Naive thymus-derived CD4-positive, alpha-beta T cell (primary cell): ENCODE measurements at regions of chr17 and their contacts with region 1.

Region 1: GRCh38 chr17:49788478-49789242 is at the start of gene KAT7:
- DNase-seq: peak; percentile 90 to 99 (median 99)
- ATAC-seq: peak; percentile 90
- H3K4me3 ChIP-seq: peak within 1 kb of the TSS; percentile 98
- H3K4me3 Mint-ChIP-seq: peak within 1 kb of the TSS; percentile 92 to 99 (median 96)
- H3K27ac ChIP-seq: peak within 1 kb of the TSS; percentile 98
- H3K27ac Mint-ChIP-seq: peak within 1 kb of the TSS; percentile 91 to 99 (median 98)
- H3K4me1 ChIP-seq: peaks cover 17 to 30% of the 10 kb centered on the region in 2 donors
- H3K4me1 Mint-ChIP-seq: peaks cover 39 to 62% (median 58%) of the 10 kb centered on the region in 7 donors
- H3K27me3 ChIP-seq: no peaks in the 10 kb centered on the region
- H3K27me3 Mint-ChIP-seq: peaks cover 0 to 8% (median 0%) of the 10 kb centered on the region in 5 donors
- total RNA-seq, gene KAT7: 85.6 to 195 (median 132) TPM

Region 2: DNA sequence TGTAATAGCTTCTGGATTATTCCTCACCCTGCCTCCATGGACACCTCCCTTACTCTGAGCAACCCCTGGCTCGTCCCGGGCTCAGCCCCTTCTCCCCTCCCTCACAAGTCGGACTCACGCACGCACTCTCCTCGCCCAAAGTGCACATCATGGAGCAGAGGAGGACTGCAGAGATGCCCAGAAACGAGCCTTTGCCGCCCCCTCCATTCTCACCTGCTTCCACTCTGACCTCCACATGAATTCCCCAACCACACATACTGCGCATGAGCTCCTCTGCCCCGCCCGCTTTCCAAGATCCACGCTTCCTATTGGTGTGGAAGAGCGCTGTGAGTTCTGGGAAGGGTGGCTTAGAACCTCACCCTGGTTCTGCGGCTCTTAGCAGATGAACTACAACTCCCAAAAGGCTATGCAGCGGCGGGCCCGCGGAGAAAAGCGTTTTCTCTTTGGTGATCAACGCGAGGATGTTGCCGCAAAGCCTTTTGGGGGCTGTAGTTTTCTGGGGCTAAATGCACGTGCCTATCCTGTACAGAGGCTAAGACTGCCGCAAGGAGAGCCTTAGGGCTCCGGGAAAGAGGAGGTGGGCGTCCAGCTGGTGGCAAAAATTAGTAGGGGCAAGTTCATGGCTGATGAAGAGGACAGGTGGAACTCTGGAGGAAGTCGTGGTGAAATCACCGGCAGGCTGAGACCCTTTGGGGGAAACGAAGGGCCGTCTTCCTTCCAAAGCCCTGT is 373.9 kb before region 1 on chr17 and contains the start of gene PHB1:
- CTCF ChIA-PET with region 1: no interaction called
- POLR2A ChIA-PET with region 1: no interaction called
- intact Hi-C with region 1: loop called (anchors 1 to 10 kb)
- DNase-seq: peak; percentile 75 to 98 (median 93)
- ATAC-seq: peak; percentile 99
- H3K4me3 ChIP-seq: peak within 1 kb of the TSS; percentile 77
- H3K4me3 Mint-ChIP-seq: peak within 1 kb of the TSS; percentile 92 to 99 (median 96)
- H3K27ac ChIP-seq: peak within 1 kb of the TSS; percentile 77
- H3K27ac Mint-ChIP-seq: peak within 1 kb of the TSS; percentile 78 to 99 (median 92)
- H3K4me1 ChIP-seq: peaks cover 8% of the 10 kb centered on the region in 2 donors
- H3K4me1 Mint-ChIP-seq: peaks cover 11 to 30% (median 26%) of the 10 kb centered on the region in 7 donors
- H3K27me3 ChIP-seq: no peaks in the 10 kb centered on the region
- H3K27me3 Mint-ChIP-seq: peaks cover 0 to 3% (median 0%) of the 10 kb centered on the region in 5 donors
- total RNA-seq, gene PHB1: 50.0 to 186 (median 54.4) TPM

Region 3: DNA sequence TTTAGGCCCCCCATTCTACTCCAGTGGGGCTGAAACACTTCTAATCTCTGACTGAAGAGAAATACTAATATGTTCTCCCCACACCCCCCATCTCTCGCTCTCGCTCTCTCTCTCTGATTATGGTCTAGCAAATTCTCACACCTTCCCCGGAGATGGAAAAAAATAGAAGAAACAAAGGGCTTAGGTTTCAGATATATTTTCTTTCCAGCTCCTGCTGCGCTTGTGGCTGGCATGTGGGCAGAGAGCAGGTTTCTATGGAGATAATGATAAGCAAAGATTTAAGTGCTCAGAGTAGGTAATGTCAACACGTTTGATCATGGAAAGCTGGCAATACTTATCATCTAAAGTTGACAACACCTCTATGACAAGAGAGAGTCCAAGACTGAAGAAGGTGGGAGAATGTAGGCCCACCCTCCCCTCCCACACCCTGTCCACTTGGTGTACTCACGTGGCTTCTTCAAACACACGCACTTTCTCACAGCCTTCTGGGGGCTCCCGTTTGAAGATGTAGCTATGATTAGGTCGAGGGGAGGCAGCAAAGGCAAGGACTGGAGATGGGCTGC is 72.9 kb before region 1 on chr17:
- CTCF ChIA-PET with region 1: interaction called, 3 read pairs
- POLR2A ChIA-PET with region 1: interaction called, 10 read pairs
- intact Hi-C with region 1: no loop called
- DNase-seq: peak in 3 of 9 donors; percentile 23 to 41 (median 39)
- ATAC-seq: peak; percentile 78
- H3K4me3 ChIP-seq: no peak overlapping the region
- H3K4me3 Mint-ChIP-seq: peak overlapping the region in 3 of 10 donors; percentile 19 to 51 (median 48)
- H3K27ac ChIP-seq: peak overlapping the region; percentile 66
- H3K27ac Mint-ChIP-seq: peak overlapping the region; percentile 45 to 90 (median 89)
- H3K4me1 ChIP-seq: peaks cover 0 to 49% of the 10 kb centered on the region in 2 donors
- H3K4me1 Mint-ChIP-seq: peaks cover 22 to 35% (median 23%) of the 10 kb centered on the region in 7 donors
- H3K27me3 ChIP-seq: no peaks in the 10 kb centered on the region
- H3K27me3 Mint-ChIP-seq: no peaks in the 10 kb centered on the region

Region 4: GRCh38 chr17:49748791-49749190 is 39.9 kb before region 1 on chr17:
- CTCF ChIA-PET with region 1: no interaction called
- POLR2A ChIA-PET with region 1: interaction called, 22 read pairs
- intact Hi-C with region 1: loop called in 1 of 2 experiments (anchors 1 kb)
- DNase-seq: peak in 6 of 9 donors; percentile 43 to 61 (median 48)
- ATAC-seq: peak; percentile 79
- H3K4me3 ChIP-seq: no peak overlapping the region
- H3K4me3 Mint-ChIP-seq: peak overlapping the region; percentile 60 to 87 (median 76)
- H3K27ac ChIP-seq: peak overlapping the region; percentile 84
- H3K27ac Mint-ChIP-seq: peak overlapping the region; percentile 88 to 98 (median 97)
- H3K4me1 ChIP-seq: peaks cover 70 to 76% of the 10 kb centered on the region in 2 donors
- H3K4me1 Mint-ChIP-seq: peaks cover 49 to 92% (median 76%) of the 10 kb centered on the region in 7 donors
- H3K27me3 ChIP-seq: no peaks in the 10 kb centered on the region
- H3K27me3 Mint-ChIP-seq: no peaks in the 10 kb centered on the region

Region 5: DNA sequence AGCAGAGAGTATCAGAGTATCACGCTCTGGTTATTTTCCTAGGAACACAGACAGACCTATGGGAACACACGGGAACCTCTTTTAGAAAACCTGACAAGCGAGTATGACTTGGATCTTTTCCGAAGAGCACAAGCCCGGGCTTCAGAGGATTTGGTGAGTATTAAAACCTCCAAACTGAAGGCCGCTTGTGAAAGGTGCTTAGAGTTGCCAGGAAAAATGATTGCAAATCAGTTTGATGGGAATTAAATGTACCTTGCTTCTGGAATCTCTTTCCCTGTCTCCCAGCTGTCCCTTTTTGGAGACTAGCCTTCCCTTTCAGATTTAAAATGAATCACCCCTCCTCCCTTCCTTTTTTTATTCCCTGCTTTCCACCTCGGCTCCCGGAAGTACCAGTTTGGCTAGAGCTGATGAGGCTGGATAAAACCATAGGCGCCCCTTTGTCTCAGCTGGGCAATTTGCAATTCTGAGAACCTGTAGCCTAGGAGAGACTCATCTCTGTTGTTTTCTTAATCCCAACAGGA is 27.2 kb after region 1 on chr17:
- CTCF ChIA-PET with region 1: no interaction called
- POLR2A ChIA-PET with region 1: interaction called, 11 read pairs
- intact Hi-C with region 1: loop called in 1 of 2 experiments (anchors 1 kb)
- DNase-seq: no peak
- ATAC-seq: no peak
- H3K4me3 ChIP-seq: no peak overlapping the region
- H3K4me3 Mint-ChIP-seq: peak overlapping the region in 5 of 10 donors; percentile 43 to 85 (median 67)
- H3K27ac ChIP-seq: peak overlapping the region; percentile 55
- H3K27ac Mint-ChIP-seq: peak overlapping the region; percentile 78 to 99 (median 96)
- H3K4me1 ChIP-seq: peaks cover 36 to 60% of the 10 kb centered on the region in 2 donors
- H3K4me1 Mint-ChIP-seq: peaks cover 32 to 79% (median 73%) of the 10 kb centered on the region in 7 donors
- H3K27me3 ChIP-seq: no peaks in the 10 kb centered on the region
- H3K27me3 Mint-ChIP-seq: no peaks in the 10 kb centered on the region

Region 6: GRCh38 chr17:49899191-49899485 is 110.5 kb after region 1 on chr17:
- CTCF ChIA-PET with region 1: no interaction called
- POLR2A ChIA-PET with region 1: no interaction called
- intact Hi-C with region 1: no loop called
- DNase-seq: no peak
- ATAC-seq: no peak
- H3K4me3 ChIP-seq: no peak overlapping the region
- H3K4me3 Mint-ChIP-seq: no peak overlapping the region
- H3K27ac ChIP-seq: no peak overlapping the region
- H3K27ac Mint-ChIP-seq: no peak overlapping the region
- H3K4me1 ChIP-seq: no peaks in the 10 kb centered on the region
- H3K4me1 Mint-ChIP-seq: peaks cover 0 to 3% (median 0%) of the 10 kb centered on the region in 7 donors
- H3K27me3 ChIP-seq: peaks cover 5 to 12% of the 10 kb centered on the region in 2 donors
- H3K27me3 Mint-ChIP-seq: peaks cover 46 to 72% (median 57%) of the 10 kb centered on the region in 5 donors

Region 7: DNA sequence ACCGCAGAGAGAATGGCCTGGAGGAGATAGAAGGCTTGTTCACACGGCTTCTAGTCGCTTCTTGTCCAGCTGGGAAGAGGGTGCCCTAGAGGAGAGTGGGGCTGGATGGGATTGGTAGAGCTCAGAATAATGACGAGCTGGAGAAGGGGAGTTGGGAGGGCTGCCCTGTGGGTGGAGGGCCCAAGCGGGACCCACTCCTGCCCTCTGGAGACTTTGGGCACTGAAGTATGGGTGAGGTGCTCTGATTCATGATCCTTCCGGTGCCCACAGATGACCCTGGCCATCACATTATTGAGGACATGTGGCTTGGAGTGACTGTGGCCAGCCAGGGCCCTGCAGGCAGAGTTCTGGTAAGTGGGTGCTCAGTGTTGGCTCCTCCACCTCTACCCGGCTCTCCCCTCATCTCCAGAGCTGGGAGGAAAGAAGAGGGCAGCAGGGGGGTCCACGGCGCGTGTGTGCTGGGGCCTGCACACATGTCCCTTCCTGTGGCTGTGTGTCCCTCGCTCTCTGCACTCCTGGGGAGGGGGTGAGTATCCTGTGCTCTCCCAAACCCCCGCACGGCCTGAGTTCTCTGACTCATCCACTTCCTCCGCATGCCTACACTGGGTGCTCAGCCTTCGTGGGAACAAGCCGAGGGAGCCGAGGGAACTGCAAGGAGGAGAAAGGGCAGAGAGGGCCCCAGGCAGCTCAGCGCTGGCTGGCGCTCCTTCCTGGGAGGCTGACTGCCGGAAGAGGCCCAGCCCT is 275.8 kb after region 1 on chr17:
- CTCF ChIA-PET with region 1: no interaction called
- POLR2A ChIA-PET with region 1: no interaction called
- intact Hi-C with region 1: no loop called
- DNase-seq: no peak
- ATAC-seq: peak; percentile 31
- H3K4me3 ChIP-seq: no peak overlapping the region
- H3K4me3 Mint-ChIP-seq: no peak overlapping the region
- H3K27ac ChIP-seq: no peak overlapping the region
- H3K27ac Mint-ChIP-seq: peak overlapping the region in 1 of 9 donors; percentile 76
- H3K4me1 ChIP-seq: no peaks in the 10 kb centered on the region
- H3K4me1 Mint-ChIP-seq: peaks cover 0 to 5% (median 0%) of the 10 kb centered on the region in 7 donors
- H3K27me3 ChIP-seq: no peaks in the 10 kb centered on the region
- H3K27me3 Mint-ChIP-seq: no peaks in the 10 kb centered on the region

Region 8: DNA sequence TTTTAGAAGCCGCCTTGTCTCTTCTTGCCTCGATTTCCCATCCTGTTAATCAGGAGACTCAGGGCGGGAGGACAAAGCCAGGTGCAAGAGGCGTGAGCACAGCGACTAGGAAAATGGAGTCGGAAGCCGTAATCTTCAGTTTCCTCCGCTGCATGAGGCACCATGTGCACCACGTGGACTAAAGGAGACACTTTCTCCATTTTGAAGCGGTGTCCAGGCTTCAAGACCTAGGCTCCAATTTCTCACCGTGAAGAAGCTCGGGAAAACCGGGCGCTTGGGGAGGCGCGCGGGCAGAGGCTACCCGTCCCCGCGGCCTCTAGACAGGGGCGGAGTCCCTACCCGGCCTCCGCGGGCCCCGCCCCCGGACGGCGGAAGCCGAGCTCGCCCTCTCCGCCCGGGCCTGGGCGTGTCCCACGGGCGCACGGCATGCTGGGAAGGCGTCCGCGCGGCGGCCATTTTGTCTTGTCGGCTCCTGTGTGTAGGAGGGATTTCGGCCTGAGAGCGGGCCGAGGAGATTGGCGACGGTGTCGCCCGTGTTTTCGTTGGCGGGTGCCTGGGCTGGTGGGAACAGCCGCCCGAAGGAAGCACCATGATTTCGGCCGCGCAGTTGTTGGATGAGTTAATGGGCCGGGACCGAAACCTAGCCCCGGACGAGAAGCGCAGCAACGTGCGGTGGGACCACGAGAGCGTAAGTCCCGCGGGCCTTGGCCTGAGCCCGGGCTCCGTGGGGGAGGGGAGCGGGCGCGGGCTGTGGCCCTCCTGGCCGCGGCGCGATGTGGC is 930.7 kb after region 1 on chr17 and contains the start of gene LUC7L3:
- CTCF ChIA-PET with region 1: no interaction called
- POLR2A ChIA-PET with region 1: no interaction called
- intact Hi-C with region 1: loop called in 1 of 2 experiments (anchors 2 kb)
- DNase-seq: peak; percentile 88 to 97 (median 95)
- ATAC-seq: peak; percentile 98
- H3K4me3 ChIP-seq: peak within 1 kb of the TSS; percentile 92
- H3K4me3 Mint-ChIP-seq: peak within 1 kb of the TSS; percentile 84 to 99 (median 98)
- H3K27ac ChIP-seq: peak within 1 kb of the TSS; percentile 95
- H3K27ac Mint-ChIP-seq: peak within 1 kb of the TSS; percentile 93 to 100 (median 99)
- H3K4me1 ChIP-seq: peaks cover 22 to 26% of the 10 kb centered on the region in 2 donors
- H3K4me1 Mint-ChIP-seq: peaks cover 19 to 37% (median 27%) of the 10 kb centered on the region in 7 donors
- H3K27me3 ChIP-seq: no peaks in the 10 kb centered on the region
- H3K27me3 Mint-ChIP-seq: no peaks in the 10 kb centered on the region
- total RNA-seq, gene LUC7L3: 131 to 331 (median 149) TPM